Activated naive CD4-positive, alpha-beta T cell treated with anti-CD3 and anti-CD28 coated beads for 36 hours (primary cell): ENCODE measurements at regions of chr17 and their contacts with region 1.

Region 1: DNA sequence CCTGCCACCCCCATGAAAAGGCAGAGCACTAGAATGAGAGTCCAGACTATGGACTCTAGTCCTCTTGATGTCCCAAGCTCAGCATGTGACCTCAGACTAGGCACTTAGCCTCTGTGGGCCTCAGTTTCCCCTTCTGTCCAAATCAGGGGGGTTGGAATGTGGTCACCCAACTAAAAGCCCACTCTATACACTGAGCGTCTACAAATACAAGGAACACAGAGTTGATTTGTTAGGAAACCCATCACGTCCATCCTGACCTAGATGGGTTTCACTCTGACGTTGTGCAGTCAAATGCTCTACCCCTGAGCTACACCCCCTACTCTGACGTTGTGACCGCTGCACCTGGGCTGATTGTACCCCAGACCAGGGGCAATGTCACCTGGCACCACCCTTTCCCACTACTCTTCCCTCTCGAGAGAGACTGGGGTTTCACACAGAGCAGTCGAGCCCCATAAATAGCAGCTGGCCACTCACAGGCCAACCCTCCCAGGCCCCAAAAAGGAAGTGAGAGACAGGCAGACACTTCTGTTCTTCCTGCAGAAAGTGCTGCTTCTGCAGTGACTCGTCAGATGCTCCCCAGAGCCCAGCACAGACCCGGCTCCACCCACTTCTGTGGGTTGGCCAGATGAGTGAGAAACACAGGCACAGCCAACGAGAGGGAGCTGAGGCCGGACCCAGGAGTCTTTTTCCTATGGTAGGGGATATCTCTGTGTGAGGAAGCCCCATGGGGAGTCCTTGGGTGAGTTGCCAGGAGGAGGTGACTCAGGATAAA is 16.1 kb upstream of the TNFRSF13B start:
- DNase-seq: peak; percentile 71
- H3K4me3 Mint-ChIP-seq: no peak overlapping the region
- H3K27ac Mint-ChIP-seq: no peak overlapping the region
- H3K4me1 Mint-ChIP-seq: peaks cover 30% of the 10 kb centered on the region
- H3K27me3 Mint-ChIP-seq: no peaks in the 10 kb centered on the region

Region 2: DNA sequence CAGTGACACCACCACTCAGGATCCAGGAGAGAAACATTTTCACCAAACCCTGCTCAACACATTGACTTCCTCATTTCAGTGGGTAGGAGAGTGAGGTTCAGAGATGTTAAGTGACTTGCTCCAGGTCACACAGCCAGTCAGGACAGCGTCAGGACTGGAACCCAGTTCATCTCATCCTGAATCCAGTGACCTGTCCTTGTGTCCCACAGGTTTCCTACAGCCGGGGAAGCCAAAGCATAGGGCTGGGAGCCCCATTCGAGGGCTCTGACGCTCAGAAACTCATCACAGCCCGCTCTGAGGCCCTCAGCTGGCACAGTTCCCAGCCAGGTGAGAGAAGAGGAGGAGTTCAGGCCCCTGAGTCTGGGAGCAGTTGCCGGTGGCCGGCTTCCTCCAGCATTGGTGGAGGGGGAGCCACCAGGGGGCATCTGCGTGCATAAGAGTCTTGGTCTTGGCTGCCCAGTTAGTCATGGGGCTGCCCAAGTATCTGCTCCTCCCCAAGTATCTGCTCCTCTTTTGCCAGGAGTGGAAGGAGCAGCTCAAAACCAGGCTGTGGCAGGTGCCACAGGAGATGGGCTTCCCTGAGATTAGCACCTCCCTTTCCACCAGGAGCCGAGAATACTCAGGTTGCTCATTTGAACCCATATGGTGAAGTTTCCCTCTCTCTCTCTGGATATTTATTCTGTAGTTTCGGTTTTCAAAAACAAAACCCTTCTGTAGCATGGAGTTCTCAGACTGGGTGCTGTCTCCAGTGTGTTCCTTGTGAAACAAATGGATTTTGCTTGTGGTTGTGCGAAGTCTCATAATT is 72.1 kb before region 1 on chr17:
- CTCF ChIA-PET with region 1: interaction called, 3 read pairs
- intact Hi-C with region 1: loop called (anchors 1 kb)
- DNase-seq: peak; percentile 64
- H3K4me3 Mint-ChIP-seq: no peak overlapping the region
- H3K27ac Mint-ChIP-seq: no peak overlapping the region
- H3K4me1 Mint-ChIP-seq: peaks cover 17% of the 10 kb centered on the region
- H3K27me3 Mint-ChIP-seq: no peaks in the 10 kb centered on the region

Region 3: GRCh38 chr17:16922386-16923104 is 65.5 kb before region 1 on chr17:
- CTCF ChIA-PET with region 1: no interaction called
- intact Hi-C with region 1: loop called (anchors 1 kb)
- DNase-seq: peak; percentile 22
- H3K4me3 Mint-ChIP-seq: no peak overlapping the region
- H3K27ac Mint-ChIP-seq: no peak overlapping the region
- H3K4me1 Mint-ChIP-seq: no peaks in the 10 kb centered on the region
- H3K27me3 Mint-ChIP-seq: no peaks in the 10 kb centered on the region